GM13977 (cell line): ENCODE measurements at regions of chrX and their contacts with region 1.

Region 1: GRCh38 chrX:46545111-46546005 is at the start of gene ZNF674:
- DNase-seq: peak; percentile 81
- CTCF ChIP-seq: peak; percentile 38

Region 2: GRCh38 chrX:46446727-46447378 is 98.5 kb before region 1 on chrX:
- in situ Hi-C with region 1: loop called (anchors 25 kb)
- DNase-seq: peak; percentile 86
- CTCF ChIP-seq: no peak

Region 3: DNA sequence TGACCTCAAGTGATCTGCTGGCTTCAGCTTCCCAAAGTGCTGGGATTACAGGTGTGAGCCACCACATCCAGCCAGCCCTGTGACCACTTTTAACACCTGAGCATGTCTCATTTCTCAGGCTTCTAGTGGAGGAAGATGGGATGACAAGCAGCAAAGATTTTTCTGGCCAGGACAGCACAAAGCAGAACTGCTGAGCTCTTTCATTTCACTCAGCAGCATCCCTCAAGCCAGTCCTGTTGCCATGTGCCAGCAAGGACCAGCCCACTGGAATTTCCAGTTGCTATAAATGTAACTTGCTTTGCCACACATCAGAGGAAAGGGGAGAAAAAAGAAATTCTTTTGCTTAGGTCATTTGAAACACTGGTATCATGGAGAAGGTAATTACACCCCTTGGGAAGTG is 137.7 kb after region 1 on chrX:
- in situ Hi-C with region 1: no loop called
- DNase-seq: no peak
- CTCF ChIP-seq: no peak

Region 4: GRCh38 chrX:46693149-46693548 is 147.8 kb after region 1 on chrX:
- in situ Hi-C with region 1: no loop called
- DNase-seq: no peak
- CTCF ChIP-seq: no peak